Heart left ventricle (tissue), 16 donors: ENCODE measurements at regions of chr1 and their contacts with region 1.

Region 1: GRCh38 chr1:24150234-24151174 is 7.6 kb upstream of the IL22RA1 start:
- DNase-seq: peak; percentile 81 to 92 (median 87)
- ATAC-seq: peak; percentile 79 to 95 (median 94)
- H3K4me3 ChIP-seq: peak overlapping the region in 8 of 12 donors; percentile 4 to 32 (median 24)
- H3K27ac ChIP-seq: peak overlapping the region in 1 of 12 donors; percentile 7
- H3K4me1 ChIP-seq: peaks cover 0 to 14% (median 3%) of the 10 kb centered on the region in 12 donors
- H3K27me3 ChIP-seq: peaks cover 0 to 31% (median 7%) of the 10 kb centered on the region in 9 donors
- CTCF ChIP-seq: peak; percentile 63 to 87 (median 84)
- POLR2A ChIP-seq: no peak

Region 2: DNA sequence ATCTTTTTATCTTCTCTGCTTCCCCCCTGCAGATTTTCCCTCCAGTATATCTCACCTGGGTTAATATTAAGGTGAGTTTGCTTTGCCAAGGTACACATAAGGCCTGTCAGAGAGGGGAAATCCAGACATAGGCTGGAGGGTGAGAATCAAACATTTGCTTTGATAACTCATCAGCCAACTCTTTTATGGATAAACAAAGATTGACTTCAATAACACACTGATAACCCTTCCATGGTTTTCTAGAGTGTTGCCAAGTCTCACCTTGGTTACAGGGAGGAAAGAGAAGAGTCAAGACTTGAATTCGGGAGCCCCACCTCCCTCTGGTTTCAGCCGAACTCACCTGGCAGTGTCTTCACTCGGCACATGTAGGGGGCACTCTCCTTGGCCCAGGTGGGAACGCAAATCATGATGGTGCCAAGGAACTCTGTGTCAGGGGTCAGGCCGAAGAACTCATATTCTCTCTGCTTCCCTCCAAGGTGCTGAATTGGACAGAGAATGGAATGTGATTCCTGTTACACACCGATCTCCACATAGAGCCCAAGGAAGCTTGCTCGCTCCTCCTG is 22.6 kb before region 1 on chr1:
- intact Hi-C with region 1: no loop called
- DNase-seq: peak in 1 of 5 donors; percentile 9
- ATAC-seq: no peak
- H3K4me3 ChIP-seq: no peak overlapping the region
- H3K27ac ChIP-seq: no peak overlapping the region
- H3K4me1 ChIP-seq: peaks cover 0 to 10% (median 0%) of the 10 kb centered on the region in 12 donors
- H3K27me3 ChIP-seq: no peaks in the 10 kb centered on the region
- CTCF ChIP-seq: no peak
- POLR2A ChIP-seq: no peak

Region 3: GRCh38 chr1:24391882-24392603 is 241.5 kb after region 1 on chr1:
- intact Hi-C with region 1: loop called in 2 of 10 experiments (anchors 2 to 5 kb)
- DNase-seq: peak in 4 of 5 donors; percentile 58 to 67 (median 60)
- ATAC-seq: peak; percentile 83 to 89 (median 86)
- H3K4me3 ChIP-seq: peak overlapping the region in 9 of 12 donors; percentile 14 to 38 (median 25)
- H3K27ac ChIP-seq: peak overlapping the region; percentile 58 to 86 (median 74)
- H3K4me1 ChIP-seq: peaks cover 0 to 21% (median 14%) of the 10 kb centered on the region in 12 donors
- H3K27me3 ChIP-seq: no peaks in the 10 kb centered on the region
- CTCF ChIP-seq: peak; percentile 61 to 80 (median 72)
- POLR2A ChIP-seq: no peak